T-cell (primary cell): ENCODE measurements at regions of chr19 and their contacts with region 1.

Region 1: GRCh38 chr19:5631568-5632240 is 8.8 kb downstream of the SAFB start:
- DNase-seq: no peak
- ATAC-seq: no peak
- H3K4me3 ChIP-seq: no peak overlapping the region
- H3K4me3 Mint-ChIP-seq: peak overlapping the region in 1 of 3 donors; percentile 42
- H3K27ac ChIP-seq: no peak overlapping the region
- H3K27ac Mint-ChIP-seq: no peak overlapping the region
- H3K4me1 ChIP-seq: peaks cover 16 to 55% of the 10 kb centered on the region in 2 experiments
- H3K4me1 Mint-ChIP-seq: peaks cover 71 to 90% (median 86%) of the 10 kb centered on the region in 3 donors
- H3K27me3 ChIP-seq: no peaks in the 10 kb centered on the region
- H3K27me3 Mint-ChIP-seq: no peaks in the 10 kb centered on the region

Region 2: GRCh38 chr19:4673216-4673615 is 958.5 kb before region 1 on chr19:
- CTCF ChIA-PET with region 1: no interaction called
- POLR2A ChIA-PET with region 1: interaction called in 1 of 2 experiments, 11 read pairs
- DNase-seq: no peak
- ATAC-seq: no peak
- H3K4me3 ChIP-seq: no peak overlapping the region
- H3K4me3 Mint-ChIP-seq: no peak overlapping the region
- H3K27ac ChIP-seq: no peak overlapping the region
- H3K27ac Mint-ChIP-seq: peak overlapping the region in 1 of 2 donors; percentile 22
- H3K4me1 ChIP-seq: peaks cover 2 to 21% of the 10 kb centered on the region in 2 experiments
- H3K4me1 Mint-ChIP-seq: peaks cover 8 to 15% (median 12%) of the 10 kb centered on the region in 3 donors
- H3K27me3 ChIP-seq: no peaks in the 10 kb centered on the region
- H3K27me3 Mint-ChIP-seq: no peaks in the 10 kb centered on the region